PC-9 (cell line): ENCODE measurements at regions of chr20 and their contacts with region 1.

Region 1: DNA sequence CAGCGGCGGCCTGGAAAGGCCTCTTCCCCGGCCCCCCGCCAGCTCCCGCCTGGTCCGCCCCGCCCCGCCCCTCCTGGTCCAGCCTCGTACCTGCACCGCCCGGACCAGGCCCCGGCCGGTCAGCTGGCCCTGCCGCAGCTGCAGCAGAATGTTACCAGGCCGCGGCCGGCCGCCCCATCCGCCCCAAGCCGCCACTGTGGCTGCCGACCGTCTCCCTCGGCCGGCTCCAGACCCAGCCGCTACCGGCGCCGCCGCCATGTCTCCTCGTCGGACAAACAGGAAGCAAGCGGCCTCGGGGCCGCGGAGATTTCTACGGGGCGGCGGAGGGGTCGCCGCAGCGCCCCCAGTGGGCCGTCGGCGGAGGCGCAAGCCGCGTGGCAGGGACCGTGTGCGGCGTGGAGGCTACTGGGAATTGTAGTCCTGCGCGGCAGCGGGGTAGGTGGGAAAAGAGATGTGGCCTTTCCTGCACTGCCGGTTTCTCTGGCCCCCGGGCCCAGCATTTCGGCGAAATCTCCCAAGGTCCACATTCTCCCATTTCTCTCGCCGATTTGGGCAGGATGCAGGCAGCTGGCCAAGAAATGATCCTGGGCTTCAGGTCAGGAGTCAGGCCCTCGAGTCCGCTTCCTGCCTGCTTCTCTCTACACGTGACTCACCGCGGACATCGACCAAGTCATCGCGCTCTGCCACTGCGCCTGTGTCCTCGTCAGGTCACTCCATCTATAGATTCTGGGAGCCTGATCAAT is at the start of gene TRPC4AP:
- DNase-seq: peak; percentile 82 to 93
- H3K4me3 ChIP-seq: peak within 1 kb of the TSS; percentile 92
- H3K27ac ChIP-seq: peak within 1 kb of the TSS; percentile 98
- H3K4me1 ChIP-seq: peaks cover 36% of the 10 kb centered on the region
- H3K27me3 ChIP-seq: no peaks in the 10 kb centered on the region
- CTCF ChIP-seq: peak; percentile 94
- total RNA-seq, gene TRPC4AP: 51.0 and 51.9 TPM in 2 replicates

Region 2: DNA sequence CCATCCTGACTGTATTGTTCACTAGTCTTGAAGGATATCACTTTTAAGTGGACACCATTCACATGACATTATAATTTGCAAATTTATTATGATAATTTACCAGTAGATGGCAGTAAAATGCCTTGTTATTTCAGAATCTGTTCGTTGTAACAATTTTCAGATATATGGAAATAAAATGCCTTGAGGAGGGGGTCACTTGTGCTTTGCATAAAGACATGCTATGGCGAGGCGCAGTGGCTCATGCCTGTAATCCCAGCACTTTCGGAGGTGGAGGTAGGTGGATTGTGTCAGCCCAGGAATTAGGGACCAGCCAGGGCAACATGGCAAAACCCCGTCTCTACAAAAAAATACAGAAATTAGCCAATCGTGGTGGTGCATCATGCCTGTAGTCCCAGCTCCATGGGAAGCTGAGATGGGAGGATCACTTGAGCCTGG is 258.2 kb before region 1 on chr20:
- CTCF ChIA-PET with region 1: no interaction called
- POLR2A ChIA-PET with region 1: no interaction called
- intact Hi-C with region 1: loop called (anchors 10 kb)
- DNase-seq: peak; percentile 10 to 52
- H3K4me3 ChIP-seq: no peak overlapping the region
- H3K27ac ChIP-seq: no peak overlapping the region
- H3K4me1 ChIP-seq: no peaks in the 10 kb centered on the region
- H3K27me3 ChIP-seq: no peaks in the 10 kb centered on the region
- CTCF ChIP-seq: peak; percentile 72

Region 3: DNA sequence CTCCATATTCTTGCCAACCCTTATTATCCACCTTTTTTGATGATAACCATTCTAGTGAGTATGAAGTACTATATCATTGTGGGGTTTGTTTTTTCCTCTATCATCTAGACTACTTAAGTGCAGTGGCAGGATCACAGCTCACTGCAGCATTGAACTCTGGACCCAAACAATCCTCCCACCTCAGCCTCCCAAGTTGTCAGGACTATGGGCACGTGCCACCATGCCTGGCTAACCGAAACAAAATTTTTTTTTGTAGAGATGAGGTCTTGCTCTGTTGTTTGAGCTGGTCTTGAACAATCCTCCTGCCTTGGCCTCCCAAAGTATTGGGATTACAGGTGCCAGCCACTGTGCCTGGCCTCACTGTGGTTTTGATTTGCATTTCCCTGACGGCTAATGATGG is 67.6 kb before region 1 on chr20:
- CTCF ChIA-PET with region 1: no interaction called
- POLR2A ChIA-PET with region 1: no interaction called
- intact Hi-C with region 1: no loop called
- DNase-seq: no peak
- H3K4me3 ChIP-seq: no peak overlapping the region
- H3K27ac ChIP-seq: no peak overlapping the region
- H3K4me1 ChIP-seq: no peaks in the 10 kb centered on the region
- H3K27me3 ChIP-seq: no peaks in the 10 kb centered on the region
- CTCF ChIP-seq: no peak

Region 4: DNA sequence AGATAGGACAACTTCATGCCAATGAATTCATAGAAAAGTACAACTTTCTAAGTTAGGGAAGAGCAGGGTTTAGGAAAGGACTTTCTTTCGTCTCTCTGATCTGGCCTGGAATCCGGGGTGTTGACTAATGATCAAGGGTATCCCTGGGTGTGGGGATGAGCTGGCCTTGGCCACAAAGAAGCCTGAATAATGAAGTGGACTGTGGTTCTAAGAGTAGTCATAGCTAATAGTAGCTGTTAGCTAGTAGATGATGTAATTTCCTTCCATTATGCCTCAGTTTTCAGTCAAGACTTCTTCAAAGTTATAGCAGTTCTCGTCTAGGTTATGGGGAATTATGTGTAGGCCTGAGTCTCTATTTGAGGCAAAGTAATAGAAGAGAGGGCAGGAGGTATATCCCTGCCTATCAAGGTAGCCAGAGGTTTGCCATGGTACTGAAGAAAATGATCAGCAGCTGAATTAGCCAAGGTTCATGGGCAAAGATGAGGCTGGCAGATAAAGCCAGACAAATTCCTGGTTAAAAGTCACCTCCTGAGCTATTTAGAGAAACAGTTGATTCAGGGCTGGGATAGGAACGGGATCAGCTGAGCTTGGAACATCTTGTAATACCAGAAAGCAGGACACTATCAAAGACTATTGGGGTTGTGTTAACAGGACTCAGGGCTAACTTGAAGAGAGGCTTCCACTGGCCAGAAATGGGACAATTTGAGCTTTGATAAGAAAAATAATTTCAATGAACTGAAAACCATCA is 18.6 kb after region 1 on chr20:
- CTCF ChIA-PET with region 1: interaction called, 21 read pairs
- POLR2A ChIA-PET with region 1: interaction called, 3 read pairs
- intact Hi-C with region 1: no loop called
- DNase-seq: no peak
- H3K4me3 ChIP-seq: no peak overlapping the region
- H3K27ac ChIP-seq: peak overlapping the region; percentile 88
- H3K4me1 ChIP-seq: peaks cover 33% of the 10 kb centered on the region
- H3K27me3 ChIP-seq: no peaks in the 10 kb centered on the region
- CTCF ChIP-seq: no peak

Region 5: DNA sequence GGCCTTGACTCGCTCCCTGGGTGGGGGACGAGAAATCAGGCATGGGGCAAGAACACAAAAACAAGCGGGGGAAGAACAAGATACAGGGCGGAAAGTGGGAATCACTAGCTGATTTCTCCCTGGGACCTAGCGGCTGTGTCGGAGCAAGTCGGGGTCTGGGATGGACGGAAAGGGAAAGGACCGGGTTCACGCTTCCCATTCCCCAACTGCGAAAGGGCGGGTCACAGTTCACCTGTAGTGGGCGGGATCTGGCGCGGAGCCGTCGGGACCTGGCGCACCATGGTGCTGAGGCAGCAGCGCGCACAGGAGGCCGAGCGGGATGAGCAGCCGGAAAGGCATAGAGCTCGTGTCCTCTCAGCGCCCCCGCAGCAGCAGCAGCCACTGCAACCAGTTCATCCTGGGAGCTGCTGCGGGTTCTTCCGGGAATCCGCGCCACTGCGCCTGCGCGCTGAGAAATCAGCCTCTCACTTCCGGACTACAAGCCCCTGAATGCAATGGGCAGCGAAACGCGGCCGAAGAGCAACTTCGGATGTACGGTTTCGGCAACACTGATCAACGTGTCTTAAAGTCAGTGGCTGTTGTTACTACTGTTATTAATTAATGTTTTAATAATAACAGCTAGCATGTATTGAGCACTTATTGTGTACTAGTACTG is 54.4 kb after region 1 on chr20 and contains the start of gene EDEM2:
- CTCF ChIA-PET with region 1: interaction called, 8 read pairs
- POLR2A ChIA-PET with region 1: no interaction called
- intact Hi-C with region 1: loop called (anchors 2 kb)
- DNase-seq: peak; percentile 89 to 96
- H3K4me3 ChIP-seq: peak within 1 kb of the TSS; percentile 93
- H3K27ac ChIP-seq: peak within 1 kb of the TSS; percentile 94
- H3K4me1 ChIP-seq: peaks cover 14% of the 10 kb centered on the region
- H3K27me3 ChIP-seq: no peaks in the 10 kb centered on the region
- CTCF ChIP-seq: no peak
- total RNA-seq, gene EDEM2: 28.6 and 34.9 TPM in 2 replicates

Region 6: GRCh38 chr20:35207950-35208611 is 115.4 kb after region 1 on chr20:
- CTCF ChIA-PET with region 1: interaction called, 7 read pairs
- POLR2A ChIA-PET with region 1: interaction called, 4 read pairs
- intact Hi-C with region 1: loop called (anchors 1 kb)
- DNase-seq: peak; percentile 56 to 73
- H3K4me3 ChIP-seq: no peak overlapping the region
- H3K27ac ChIP-seq: no peak overlapping the region
- H3K4me1 ChIP-seq: no peaks in the 10 kb centered on the region
- H3K27me3 ChIP-seq: no peaks in the 10 kb centered on the region
- CTCF ChIP-seq: peak; percentile 85

Region 7: DNA sequence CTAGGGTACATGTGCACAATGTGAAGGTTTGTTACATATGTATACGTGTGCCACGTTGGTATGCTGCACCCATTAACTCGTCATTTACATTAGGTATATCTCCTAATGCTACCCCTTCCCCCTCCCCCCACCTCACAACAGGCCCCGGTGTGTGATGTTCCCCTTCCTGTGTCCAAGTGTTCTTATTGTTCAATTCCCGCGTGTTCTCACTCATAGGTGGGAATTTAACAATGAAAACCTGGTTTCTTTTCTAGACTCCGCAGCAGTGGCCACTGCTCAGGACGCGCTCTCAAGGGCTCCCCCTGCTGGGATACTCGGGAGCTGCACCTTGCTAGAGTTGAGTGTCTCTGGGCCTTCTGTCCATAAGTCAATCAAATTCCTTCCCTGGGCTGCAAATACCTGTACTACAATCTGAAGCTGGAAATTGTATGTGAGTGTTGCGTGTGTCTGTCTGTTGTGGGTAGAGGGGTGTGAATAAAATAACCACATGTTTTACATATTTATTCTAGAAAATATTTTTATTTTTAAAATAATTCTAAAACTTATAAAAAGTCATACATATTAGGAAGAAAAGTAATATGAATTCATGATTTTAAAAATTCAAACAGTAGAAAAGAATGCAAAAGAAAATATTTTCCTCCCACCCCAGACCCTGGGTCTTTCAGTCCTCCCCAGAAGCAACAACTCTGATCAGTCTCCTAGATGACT is 354.5 kb after region 1 on chr20:
- CTCF ChIA-PET with region 1: interaction called, 13 read pairs
- POLR2A ChIA-PET with region 1: no interaction called
- intact Hi-C with region 1: loop called (anchors 10 kb)
- DNase-seq: peak; percentile 59 to 91
- H3K4me3 ChIP-seq: no peak overlapping the region
- H3K27ac ChIP-seq: no peak overlapping the region
- H3K4me1 ChIP-seq: no peaks in the 10 kb centered on the region
- H3K27me3 ChIP-seq: no peaks in the 10 kb centered on the region
- CTCF ChIP-seq: peak; percentile 96

Region 8: GRCh38 chr20:36050436-36051317 is 958.0 kb after region 1 on chr20:
- CTCF ChIA-PET with region 1: no interaction called
- POLR2A ChIA-PET with region 1: no interaction called
- intact Hi-C with region 1: loop called (anchors 5 kb)
- DNase-seq: peak; percentile 67 to 92
- H3K4me3 ChIP-seq: peak overlapping the region; percentile 95
- H3K27ac ChIP-seq: peak overlapping the region; percentile 79
- H3K4me1 ChIP-seq: peaks cover 26% of the 10 kb centered on the region
- H3K27me3 ChIP-seq: no peaks in the 10 kb centered on the region
- CTCF ChIP-seq: no peak